ENCODE measurements at regions of chr3 and their contacts with region 1.

Region 1: DNA sequence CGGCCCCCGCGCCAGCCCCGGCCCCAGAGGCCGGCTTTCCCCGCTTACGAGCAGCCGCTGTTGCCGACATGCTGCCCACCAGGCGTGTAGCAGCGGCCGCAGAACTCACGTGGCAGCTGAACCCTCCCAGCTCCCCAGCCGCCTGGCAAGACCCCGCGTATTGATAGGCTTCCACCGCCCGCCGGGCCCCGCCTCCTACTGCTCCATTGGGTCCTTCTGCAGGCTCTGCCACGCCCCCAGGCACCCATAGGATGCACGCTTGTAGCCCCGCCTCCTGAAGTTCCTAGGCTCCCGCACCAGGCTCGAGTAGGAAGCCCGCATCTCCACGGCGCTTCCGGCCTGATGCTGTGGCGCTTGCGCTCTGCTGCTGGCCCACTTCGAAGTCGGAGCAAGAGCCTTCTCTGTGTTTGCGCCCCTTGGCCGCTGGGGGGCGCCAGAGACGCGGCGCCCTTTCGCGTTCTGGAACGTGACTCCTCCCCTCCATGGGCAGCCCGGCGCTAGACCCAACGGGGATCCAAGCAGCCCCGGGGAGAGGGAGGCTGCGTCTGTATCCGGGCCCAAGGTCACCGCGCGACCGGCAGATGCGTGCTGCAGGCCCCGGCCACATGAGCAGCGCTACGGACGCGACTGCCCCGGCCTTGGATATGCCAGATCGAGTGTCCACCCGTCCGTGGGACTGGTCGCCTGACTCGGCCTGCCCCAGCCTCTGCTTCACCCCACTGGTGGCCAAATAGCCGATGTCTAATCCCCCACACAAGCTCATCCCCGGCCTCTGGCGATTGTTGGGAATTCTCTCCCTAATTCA is at the starts of genes PARP3 and RRP9:
- DNase-seq: peak; percentile 99 to 100 (median 100)
- H3K4me3 ChIP-seq: peak within 1 kb of the TSS; percentile 87
- H3K27ac ChIP-seq: peak within 1 kb of the TSS; percentile 77 to 90
- H3K4me1 ChIP-seq: peaks cover 14% of the 10 kb centered on the region
- H3K27me3 ChIP-seq: no peaks in the 10 kb centered on the region
- CTCF ChIP-seq: peak; percentile 99 to 100 (median 100)
- EP300 ChIP-seq: no peak
- POLR2A ChIP-seq: peak; percentile 33
- total RNA-seq, gene PARP3: 8.2 to 19.4 (median 11.6) TPM
- total RNA-seq, gene RRP9: 9.1 to 32.7 (median 19.3) TPM

Region 2: GRCh38 chr3:51974963-51975851 is 33.2 kb after region 1 on chr3 and contains the start of gene ABHD14A:
- intact Hi-C with region 1: loop called in 2 of 4 experiments (anchors 1 to 2 kb)
- DNase-seq: peak; percentile 75 to 86 (median 78)
- H3K4me3 ChIP-seq: peak within 1 kb of the TSS; percentile 44
- H3K27ac ChIP-seq: peak within 1 kb of the TSS; percentile 78 to 88
- H3K4me1 ChIP-seq: peaks cover 3% of the 10 kb centered on the region
- H3K27me3 ChIP-seq: no peaks in the 10 kb centered on the region
- CTCF ChIP-seq: no peak
- EP300 ChIP-seq: no peak
- POLR2A ChIP-seq: peak; percentile 25
- total RNA-seq, gene ABHD14A: 13.2 to 36.1 (median 27.4) TPM

Region 3: DNA sequence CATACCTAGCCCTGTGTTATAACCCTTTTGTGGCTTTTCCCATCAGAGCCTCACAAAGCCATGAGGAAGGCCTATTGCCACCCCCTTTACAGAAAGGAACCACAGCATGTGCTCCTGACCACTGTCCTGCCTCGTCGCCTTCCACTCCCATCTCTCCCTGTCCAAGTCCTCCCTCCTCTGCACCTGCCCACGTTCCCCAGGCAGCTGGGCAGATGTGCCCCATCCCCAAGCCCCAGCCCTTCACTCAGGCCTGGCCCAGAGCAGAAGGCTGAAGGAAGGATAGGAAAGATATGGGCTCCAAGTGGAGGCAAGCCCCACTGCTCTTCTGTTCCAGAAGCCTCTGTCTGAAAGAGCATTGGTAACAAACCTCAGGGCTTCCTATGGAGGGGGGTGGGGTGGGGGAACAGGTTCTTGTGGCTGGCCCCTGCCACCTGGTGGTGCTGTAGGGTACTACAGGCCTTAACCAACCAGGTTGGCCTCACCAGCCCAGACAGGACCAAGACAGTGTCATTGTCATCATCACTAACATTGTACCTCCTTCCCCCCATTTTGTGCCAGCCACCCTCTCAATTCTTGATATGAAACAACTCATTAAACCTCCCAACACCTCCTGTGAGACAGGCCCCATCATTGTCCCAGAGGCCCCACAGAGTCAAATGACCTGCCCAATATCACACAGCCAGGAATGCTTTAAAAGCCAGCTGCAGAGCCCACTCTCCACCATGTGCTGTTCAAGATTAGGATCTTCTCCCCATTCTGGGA is 202.2 kb after region 1 on chr3:
- intact Hi-C with region 1: loop called in 1 of 4 experiments (anchors 5 kb)
- DNase-seq: peak; percentile 79 to 89 (median 86)
- H3K4me3 ChIP-seq: no peak overlapping the region
- H3K27ac ChIP-seq: no peak overlapping the region
- H3K4me1 ChIP-seq: no peaks in the 10 kb centered on the region
- H3K27me3 ChIP-seq: no peaks in the 10 kb centered on the region
- CTCF ChIP-seq: peak; percentile 80 to 96 (median 95)
- EP300 ChIP-seq: no peak
- POLR2A ChIP-seq: peak; percentile 35

Measured in ovary (tissue), 10 donors.